ENCODE measurements at regions of chr5 and their contacts with region 1.

Region 1: DNA sequence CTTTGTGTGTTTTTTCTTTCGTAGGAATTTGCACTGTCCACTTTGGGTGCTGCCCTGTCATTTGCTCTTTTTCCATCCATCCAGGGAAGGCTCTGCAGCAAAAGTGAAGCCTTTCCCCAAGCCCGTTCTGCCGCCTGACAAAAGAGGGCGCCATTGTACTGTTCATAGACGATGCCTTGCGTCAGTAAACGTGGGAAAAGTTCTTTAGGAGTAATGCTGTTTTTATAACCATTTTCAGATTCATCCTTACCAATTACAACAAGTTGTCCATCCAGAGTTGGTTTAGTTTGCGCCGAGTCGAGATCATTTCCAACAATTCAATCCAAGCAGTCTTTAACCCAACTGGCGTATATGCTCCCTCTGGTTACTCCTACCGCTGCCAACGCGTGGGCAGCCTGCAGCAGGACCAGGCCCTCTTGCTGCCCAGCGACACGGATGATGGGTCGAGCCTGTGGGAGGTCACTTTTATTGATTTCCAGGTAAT is 34.3 kb upstream of the RPS23 start:
- DNase-seq: no peak
- H3K4me3 ChIP-seq: no peak overlapping the region
- CTCF ChIP-seq: peak; percentile 89

Region 2: DNA sequence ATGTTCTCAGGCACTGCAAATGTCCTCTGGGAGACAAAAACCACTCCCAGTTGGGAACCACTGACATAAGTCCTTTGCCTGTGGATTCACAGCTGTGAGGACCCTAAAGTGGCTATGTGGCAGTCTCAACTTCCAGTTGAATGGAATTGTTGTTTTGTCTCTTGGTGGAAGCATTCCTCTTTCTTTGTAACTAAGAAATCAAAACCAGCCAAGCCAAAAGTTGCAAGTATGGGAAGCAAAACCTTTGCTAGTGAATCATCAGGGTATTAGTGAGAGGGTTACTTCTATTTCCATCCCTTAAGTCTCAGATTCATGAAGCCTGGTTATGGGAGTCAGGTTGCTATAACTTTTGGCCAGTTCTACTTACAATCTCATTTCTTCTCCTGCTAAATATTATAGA is 15.5 kb after region 1 on chr5:
- CTCF ChIA-PET with region 1: interaction called, 34 read pairs
- POLR2A ChIA-PET with region 1: interaction called, 3 read pairs
- DNase-seq: no peak
- H3K4me3 ChIP-seq: no peak overlapping the region
- CTCF ChIP-seq: no peak

Region 3: GRCh38 chr5:82334856-82335255 is 22.4 kb after region 1 on chr5:
- CTCF ChIA-PET with region 1: interaction called, 34 read pairs
- POLR2A ChIA-PET with region 1: interaction called, 3 read pairs
- DNase-seq: peak; percentile 96
- H3K4me3 ChIP-seq: no peak overlapping the region
- CTCF ChIP-seq: no peak

Region 4: GRCh38 chr5:82351754-82352145 is 39.3 kb after region 1 on chr5:
- CTCF ChIA-PET with region 1: interaction called, 143 read pairs
- POLR2A ChIA-PET with region 1: no interaction called
- DNase-seq: no peak
- H3K4me3 ChIP-seq: no peak overlapping the region
- CTCF ChIP-seq: peak; percentile 55

Region 5: DNA sequence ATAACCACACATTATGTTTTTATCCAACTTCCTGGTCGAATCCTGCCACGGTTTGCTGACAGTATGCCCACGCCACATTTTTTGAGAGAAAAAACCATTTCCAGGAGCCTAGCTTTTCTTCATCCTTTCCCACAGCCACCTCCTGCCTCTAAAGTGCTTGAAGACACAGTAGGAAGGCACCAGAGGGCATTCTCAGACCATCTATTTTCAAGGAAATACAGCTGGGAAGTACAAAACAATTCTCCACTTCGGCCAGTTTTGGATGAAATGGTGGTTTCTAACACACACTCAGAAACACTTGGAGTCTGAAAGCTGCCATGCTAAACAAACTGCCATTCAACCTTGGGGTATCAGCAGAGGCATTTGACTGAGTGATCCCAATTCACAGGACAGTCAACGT is 52.1 kb after region 1 on chr5:
- CTCF ChIA-PET with region 1: interaction called, 52 read pairs
- POLR2A ChIA-PET with region 1: no interaction called
- DNase-seq: peak; percentile 34
- H3K4me3 ChIP-seq: no peak overlapping the region
- CTCF ChIP-seq: peak; percentile 59

Region 6: DNA sequence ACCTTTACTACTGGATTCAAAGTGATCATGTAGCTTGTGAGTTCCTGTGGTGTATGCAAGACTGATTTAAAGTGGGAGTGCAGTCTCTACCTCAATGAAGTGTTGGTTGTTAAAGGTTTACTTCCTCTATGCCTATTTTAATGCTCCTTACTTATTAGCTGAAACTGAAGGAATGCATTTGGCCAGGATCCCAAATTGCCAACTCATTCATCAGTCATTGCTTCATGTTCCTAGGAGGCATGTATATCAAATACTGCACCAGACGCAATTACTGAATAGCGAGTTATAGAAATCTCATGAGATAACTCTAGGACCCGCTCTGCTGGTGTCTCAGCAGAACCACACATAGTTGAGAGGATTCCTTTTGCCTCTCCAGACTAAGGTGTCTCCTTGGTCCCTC is 108.7 kb after region 1 on chr5:
- CTCF ChIA-PET with region 1: interaction called, 13 read pairs
- POLR2A ChIA-PET with region 1: no interaction called
- DNase-seq: peak; percentile 94
- H3K4me3 ChIP-seq: no peak overlapping the region
- CTCF ChIP-seq: peak; percentile 29